ENCODE measurements at regions of chr17 and their contacts with region 1.

Region 1: GRCh38 chr17:56977673-56978395 is at the start of gene SCPEP1:
- DNase-seq: peak; percentile 85
- H3K4me3 Mint-ChIP-seq: peak within 1 kb of the TSS; percentile 90
- H3K27ac Mint-ChIP-seq: peak within 1 kb of the TSS; percentile 39
- H3K4me1 Mint-ChIP-seq: peaks cover 19% of the 10 kb centered on the region
- H3K27me3 Mint-ChIP-seq: peaks cover 3% of the 10 kb centered on the region
- total RNA-seq, gene SCPEP1: 11.7 to 15.3 TPM

Region 2: GRCh38 chr17:56913864-56914640 is 63.8 kb before region 1 on chr17 and contains the start of gene TRIM25:
- CTCF ChIA-PET with region 1: no interaction called
- intact Hi-C with region 1: loop called (anchors 5 kb)
- DNase-seq: peak; percentile 94
- H3K4me3 Mint-ChIP-seq: peak within 1 kb of the TSS; percentile 83
- H3K27ac Mint-ChIP-seq: peak within 1 kb of the TSS; percentile 98
- H3K4me1 Mint-ChIP-seq: peaks cover 50% of the 10 kb centered on the region
- H3K27me3 Mint-ChIP-seq: no peaks in the 10 kb centered on the region
- total RNA-seq, gene TRIM25: 157 to 161 TPM

Region 3: GRCh38 chr17:56948491-56948890 is 29.3 kb before region 1 on chr17:
- CTCF ChIA-PET with region 1: no interaction called
- intact Hi-C with region 1: no loop called
- DNase-seq: no peak
- H3K4me3 Mint-ChIP-seq: no peak overlapping the region
- H3K27ac Mint-ChIP-seq: no peak overlapping the region
- H3K4me1 Mint-ChIP-seq: peaks cover 3% of the 10 kb centered on the region
- H3K27me3 Mint-ChIP-seq: no peaks in the 10 kb centered on the region

Region 4: DNA sequence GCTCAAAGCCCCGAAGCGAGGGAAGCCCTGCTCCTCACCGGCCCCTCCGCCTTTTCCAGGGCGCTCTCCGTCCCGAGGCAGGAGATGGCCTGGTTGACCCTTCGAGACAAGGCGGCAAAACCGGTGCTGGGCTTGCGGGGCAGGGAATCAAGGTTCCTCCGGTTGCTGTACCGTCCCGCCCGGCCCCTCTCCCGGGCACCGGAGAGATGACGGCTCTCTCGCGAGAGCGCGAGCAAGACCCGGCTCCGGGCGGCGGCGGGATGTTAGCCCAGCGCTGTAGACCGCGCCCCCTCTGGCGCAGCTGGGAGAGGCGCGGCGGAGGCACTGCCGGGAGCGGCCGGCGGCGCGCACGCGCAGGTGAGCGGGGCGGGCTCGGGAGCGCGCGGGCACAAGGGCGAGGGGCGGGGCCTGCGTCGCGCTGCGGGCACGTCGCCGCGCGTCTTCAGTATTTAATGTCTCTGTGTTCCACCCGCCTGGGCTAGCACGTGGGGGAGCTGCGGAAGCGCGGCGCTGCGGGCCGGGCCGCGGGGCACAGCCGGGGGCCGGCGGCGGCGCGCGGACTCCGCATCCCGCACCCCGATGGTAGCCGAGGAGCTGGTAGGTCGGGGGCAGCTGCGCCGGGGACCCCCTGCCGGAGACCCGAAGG is 107.1 kb after region 1 on chr17 and contains the start of gene AKAP1:
- CTCF ChIA-PET with region 1: no interaction called
- intact Hi-C with region 1: loop called (anchors 1 kb)
- DNase-seq: peak; percentile 95
- H3K4me3 Mint-ChIP-seq: peak within 1 kb of the TSS; percentile 83
- H3K27ac Mint-ChIP-seq: peak within 1 kb of the TSS; percentile 81
- H3K4me1 Mint-ChIP-seq: peaks cover 43% of the 10 kb centered on the region
- H3K27me3 Mint-ChIP-seq: no peaks in the 10 kb centered on the region
- total RNA-seq, gene AKAP1: 17.6 to 23.1 TPM

Measured in activated naive CD4-positive, alpha-beta T cell treated with anti-CD3 and anti-CD28 coated beads for 36 hours (primary cell).